ENCODE measurements at regions of chr1 and their contacts with region 1.

Region 1: GRCh38 chr1:205977402-205978014 is 25.7 kb downstream of the RAB7B start:
- DNase-seq: peak; percentile 51 to 85
- H3K4me3 ChIP-seq: no peak overlapping the region
- H3K27ac ChIP-seq: no peak overlapping the region
- H3K4me1 ChIP-seq: no peaks in the 10 kb centered on the region; a peak in 2 of 7 replicates
- H3K27me3 ChIP-seq: no peaks in the 10 kb centered on the region; a peak in 1 of 7 replicates
- CTCF ChIP-seq: peak; percentile 93 to 98 (median 97)
- EP300 ChIP-seq: no peak
- POLR2A ChIP-seq: no peak
- RAD21 ChIP-seq: peak; percentile 99 to 100

Region 2: GRCh38 chr1:205791568-205792180 is 185.8 kb before region 1 on chr1:
- CTCF ChIA-PET with region 1: interaction called, 206 read pairs
- POLR2A ChIA-PET with region 1: interaction called, 3 read pairs
- DNase-seq: peak in 1 of 2 experiments; percentile 70
- H3K4me3 ChIP-seq: no peak overlapping the region
- H3K27ac ChIP-seq: no peak overlapping the region
- H3K4me1 ChIP-seq: no peaks in the 10 kb centered on the region
- H3K27me3 ChIP-seq: no peaks in the 10 kb centered on the region
- CTCF ChIP-seq: peak; percentile 82 to 84 (median 84)
- EP300 ChIP-seq: no peak
- POLR2A ChIP-seq: no peak
- RAD21 ChIP-seq: peak; percentile 93 to 95

Region 3: GRCh38 chr1:205827623-205828022 is 149.9 kb before region 1 on chr1:
- CTCF ChIA-PET with region 1: interaction called, 10 read pairs
- POLR2A ChIA-PET with region 1: no interaction called
- DNase-seq: no peak
- H3K4me3 ChIP-seq: no peak overlapping the region
- H3K27ac ChIP-seq: no peak overlapping the region
- H3K4me1 ChIP-seq: peaks cover 0 to 12% (median 2%) of the 10 kb centered on the region in 4 experiments; a peak in 4 of 7 replicates
- H3K27me3 ChIP-seq: no peaks in the 10 kb centered on the region
- CTCF ChIP-seq: no peak
- EP300 ChIP-seq: no peak
- POLR2A ChIP-seq: no peak
- RAD21 ChIP-seq: no peak

Region 4: GRCh38 chr1:205913451-205914155 is 63.9 kb before region 1 on chr1:
- CTCF ChIA-PET with region 1: interaction called, 394 read pairs
- POLR2A ChIA-PET with region 1: interaction called, 8 read pairs
- DNase-seq: no peak
- H3K4me3 ChIP-seq: no peak overlapping the region
- H3K27ac ChIP-seq: no peak overlapping the region
- H3K4me1 ChIP-seq: peaks cover 0 to 6% (median 2%) of the 10 kb centered on the region in 4 experiments; a peak in 3 of 7 replicates
- H3K27me3 ChIP-seq: no peaks in the 10 kb centered on the region; a peak in 1 of 7 replicates
- CTCF ChIP-seq: no peak
- EP300 ChIP-seq: no peak
- POLR2A ChIP-seq: no peak
- RAD21 ChIP-seq: no peak

Region 5: GRCh38 chr1:205950280-205950679 is 27.2 kb before region 1 on chr1:
- CTCF ChIA-PET with region 1: interaction called, 55 read pairs
- POLR2A ChIA-PET with region 1: no interaction called
- DNase-seq: no peak
- H3K4me3 ChIP-seq: no peak overlapping the region
- H3K27ac ChIP-seq: no peak overlapping the region
- H3K4me1 ChIP-seq: peaks cover 0 to 6% (median 6%) of the 10 kb centered on the region in 4 experiments; a peak in 5 of 7 replicates
- H3K27me3 ChIP-seq: peaks cover 0 to 2% (median 0%) of the 10 kb centered on the region in 4 experiments; a peak in 2 of 7 replicates
- CTCF ChIP-seq: no peak
- EP300 ChIP-seq: no peak
- POLR2A ChIP-seq: no peak
- RAD21 ChIP-seq: no peak

Region 6: DNA sequence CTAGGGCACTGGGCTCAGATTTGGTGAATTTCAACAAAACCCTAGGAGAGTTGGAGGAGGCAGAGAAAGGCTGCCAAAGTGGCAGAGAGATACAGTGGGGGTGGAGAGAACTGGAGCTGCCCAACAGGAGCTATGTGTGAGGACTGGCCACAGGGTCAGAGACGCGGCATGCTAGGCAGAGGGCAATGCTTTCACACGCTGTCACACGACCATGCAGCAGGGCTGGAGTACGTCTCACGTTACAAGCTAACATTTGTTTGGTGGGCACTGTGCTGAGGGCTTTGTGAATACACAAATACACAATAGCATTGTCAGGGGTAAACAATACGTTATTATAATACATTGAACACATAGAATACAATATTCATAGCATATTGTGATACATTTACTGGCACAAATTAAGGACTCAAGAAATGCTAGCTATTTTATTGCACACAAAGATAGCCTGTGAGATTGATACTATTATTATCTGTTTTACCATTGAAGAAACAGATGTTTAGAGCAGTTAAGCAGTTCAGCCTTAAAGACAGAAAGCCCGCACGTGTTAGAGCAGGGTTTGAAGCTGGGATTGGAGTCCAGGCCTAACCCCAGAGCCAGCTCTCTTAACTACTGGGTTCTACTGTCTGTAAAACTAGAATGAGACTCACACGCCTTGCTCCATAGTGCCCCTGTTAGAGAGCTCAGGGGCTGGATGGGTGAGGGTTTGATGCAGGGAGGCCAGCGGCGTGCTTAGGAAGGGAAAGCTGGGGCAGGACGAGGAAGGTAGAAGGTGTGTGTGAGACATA is 21.1 kb after region 1 on chr1:
- CTCF ChIA-PET with region 1: interaction called, 37 read pairs
- POLR2A ChIA-PET with region 1: no interaction called
- DNase-seq: no peak
- H3K4me3 ChIP-seq: no peak overlapping the region
- H3K27ac ChIP-seq: no peak overlapping the region
- H3K4me1 ChIP-seq: peaks cover 0 to 7% (median 3%) of the 10 kb centered on the region in 4 experiments; a peak in 3 of 7 replicates
- H3K27me3 ChIP-seq: peaks cover 6 to 22% (median 17%) of the 10 kb centered on the region in 4 experiments
- CTCF ChIP-seq: no peak
- EP300 ChIP-seq: no peak
- POLR2A ChIP-seq: no peak
- RAD21 ChIP-seq: no peak

Region 7: DNA sequence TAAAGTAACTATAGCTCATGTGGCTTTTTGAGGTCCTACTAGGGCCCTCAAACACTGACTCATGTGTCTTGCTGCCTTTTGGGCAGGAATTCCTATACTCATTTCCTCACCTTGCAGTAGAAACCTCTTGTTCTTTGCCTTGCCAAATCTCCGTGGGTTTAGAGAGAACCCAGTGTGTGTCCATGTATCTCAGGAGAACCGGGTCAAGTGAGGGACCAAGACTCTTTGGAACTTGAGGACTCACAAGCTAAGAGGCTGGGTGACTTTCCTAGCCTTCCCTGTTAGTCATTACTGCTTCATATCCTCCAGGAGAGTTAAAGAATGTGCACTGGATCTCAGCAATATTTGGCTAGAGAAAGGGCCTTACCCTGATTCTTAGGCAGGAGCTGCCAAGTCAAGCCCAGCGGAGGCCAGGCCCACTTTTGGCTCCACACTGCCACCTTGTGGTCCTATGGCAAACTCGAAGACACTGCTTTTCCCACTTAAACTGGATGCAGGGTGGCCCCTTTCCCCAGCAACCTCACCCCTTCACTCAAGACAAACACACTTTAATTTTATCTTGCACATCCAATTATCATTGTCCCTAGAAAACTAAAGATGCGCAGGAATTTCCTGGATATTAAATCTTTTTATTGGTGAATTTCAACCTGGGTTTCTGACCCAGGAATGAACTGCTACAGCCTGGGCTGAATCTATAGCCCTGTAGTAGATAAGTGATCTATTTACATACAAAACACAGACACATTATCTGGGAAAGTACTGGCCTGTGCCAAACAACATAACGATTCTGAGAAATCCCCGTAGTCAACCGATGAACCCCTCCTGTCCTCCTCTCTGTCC is 129.0 kb after region 1 on chr1:
- CTCF ChIA-PET with region 1: interaction called, 262 read pairs
- POLR2A ChIA-PET with region 1: no interaction called
- DNase-seq: peak; percentile 47 to 91
- H3K4me3 ChIP-seq: no peak overlapping the region
- H3K27ac ChIP-seq: no peak overlapping the region
- H3K4me1 ChIP-seq: no peaks in the 10 kb centered on the region
- H3K27me3 ChIP-seq: no peaks in the 10 kb centered on the region
- CTCF ChIP-seq: peak; percentile 92 to 95 (median 93)
- EP300 ChIP-seq: no peak
- POLR2A ChIP-seq: no peak
- RAD21 ChIP-seq: peak; percentile 93 to 96

Region 8: GRCh38 chr1:206143537-206144172 is 166.1 kb after region 1 on chr1:
- CTCF ChIA-PET with region 1: no interaction called
- POLR2A ChIA-PET with region 1: no interaction called
- DNase-seq: no peak
- H3K4me3 ChIP-seq: no peak overlapping the region
- H3K27ac ChIP-seq: no peak overlapping the region
- H3K4me1 ChIP-seq: no peaks in the 10 kb centered on the region
- H3K27me3 ChIP-seq: no peaks in the 10 kb centered on the region
- CTCF ChIP-seq: no peak
- EP300 ChIP-seq: no peak
- POLR2A ChIP-seq: no peak
- RAD21 ChIP-seq: no peak

Measured in H1 (cell line).